Heart right ventricle (tissue), 16 donors: ENCODE measurements at regions of chr6 and their contacts with region 1.

Region 1: DNA sequence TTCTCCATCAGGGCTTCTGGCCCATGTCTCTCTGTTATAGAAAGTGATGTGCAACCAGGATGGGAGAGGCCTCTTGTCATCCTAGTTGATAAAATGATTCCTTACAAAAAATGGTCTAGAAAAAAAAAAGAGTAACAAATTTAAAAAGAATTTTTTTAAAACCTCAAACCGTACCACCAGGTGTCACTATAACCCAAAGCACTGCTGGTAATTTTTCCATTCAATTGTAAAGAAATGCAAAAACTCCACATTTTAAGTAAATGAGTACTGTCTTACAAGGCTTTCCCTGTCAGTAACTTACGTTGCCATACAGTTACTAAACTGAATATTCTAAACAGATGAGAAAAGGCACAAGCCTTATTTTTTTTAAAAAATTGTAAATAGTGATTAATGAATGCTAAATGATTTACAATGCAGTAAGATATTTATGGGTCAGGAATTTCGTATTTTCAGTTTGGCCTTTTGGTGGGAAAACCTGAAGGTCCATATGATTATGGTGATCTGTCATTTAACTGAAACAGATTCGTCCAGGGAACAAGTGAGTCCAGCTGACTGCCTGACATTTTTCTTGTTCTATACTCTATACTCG is 95.4 kb downstream of the OGFRL1 start:
- DNase-seq: peak in 1 of 2 donors; percentile 38
- ATAC-seq: peak in 1 of 8 donors; percentile 26
- H3K4me3 ChIP-seq: no peak overlapping the region
- H3K27ac ChIP-seq: peak overlapping the region in 1 of 10 donors; percentile 16
- H3K4me1 ChIP-seq: peaks cover 6 to 63% (median 31%) of the 10 kb centered on the region in 9 donors
- H3K27me3 ChIP-seq: no peaks in the 10 kb centered on the region
- CTCF ChIP-seq: peak; percentile 54 to 82 (median 72)

Region 2: GRCh38 chr6:71420693-71421328 is 36.8 kb after region 1 on chr6:
- intact Hi-C with region 1: loop called in 5 of 10 experiments (anchors 2 to 5 kb)
- DNase-seq: peak; percentile 95 to 98
- ATAC-seq: peak; percentile 98 to 99 (median 99)
- H3K4me3 ChIP-seq: peak overlapping the region; percentile 60 to 93 (median 89)
- H3K27ac ChIP-seq: peak overlapping the region; percentile 90 to 98 (median 96)
- H3K4me1 ChIP-seq: peaks cover 0 to 39% (median 22%) of the 10 kb centered on the region in 9 donors
- H3K27me3 ChIP-seq: peaks cover 0 to 46% (median 0%) of the 10 kb centered on the region in 7 donors
- CTCF ChIP-seq: peak in 2 of 9 donors; percentile 18 to 20

Region 3: GRCh38 chr6:71444222-71444621 is 60.2 kb after region 1 on chr6:
- intact Hi-C with region 1: loop called in 4 of 10 experiments (anchors 2 to 10 kb)
- DNase-seq: no peak
- ATAC-seq: peak in 5 of 8 donors; percentile 67 to 85 (median 73)
- H3K4me3 ChIP-seq: peak overlapping the region in 1 of 10 donors; percentile 24
- H3K27ac ChIP-seq: no peak overlapping the region
- H3K4me1 ChIP-seq: peaks cover 0 to 21% (median 0%) of the 10 kb centered on the region in 9 donors
- H3K27me3 ChIP-seq: no peaks in the 10 kb centered on the region
- CTCF ChIP-seq: peak in 7 of 9 donors; percentile 22 to 58 (median 26)

Region 4: DNA sequence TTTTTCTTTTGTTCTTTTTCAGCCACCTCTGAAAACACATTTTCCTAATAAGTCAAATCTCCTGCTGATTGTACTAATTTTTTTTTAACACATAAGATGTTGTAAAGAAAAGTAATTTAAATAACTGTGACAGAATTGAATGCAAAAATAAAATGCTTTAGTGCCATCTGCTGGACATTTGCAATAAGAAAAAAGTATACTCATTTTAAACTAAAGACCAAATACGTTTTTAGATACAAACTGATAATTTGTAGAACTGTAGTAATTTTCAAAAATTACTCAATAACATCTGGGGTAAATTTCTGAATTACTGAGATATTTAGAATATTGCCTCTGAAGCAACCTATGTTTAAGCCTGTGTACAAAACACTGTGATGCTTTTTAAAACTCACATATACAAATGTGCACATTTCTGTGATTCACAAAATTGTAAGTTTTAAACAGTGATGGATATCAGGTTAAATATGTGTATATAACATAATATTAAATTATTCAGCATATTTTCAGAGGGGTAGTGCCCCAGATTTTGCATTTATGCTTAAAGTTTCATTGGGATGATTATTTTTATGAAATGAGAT is 701.1 kb after region 1 on chr6:
- intact Hi-C with region 1: loop called in 2 of 10 experiments (anchors 10 kb)
- DNase-seq: no peak
- ATAC-seq: no peak
- H3K4me3 ChIP-seq: no peak overlapping the region
- H3K27ac ChIP-seq: no peak overlapping the region
- H3K4me1 ChIP-seq: no peaks in the 10 kb centered on the region
- H3K27me3 ChIP-seq: peaks cover 0 to 7% (median 4%) of the 10 kb centered on the region in 7 donors
- CTCF ChIP-seq: peak in 8 of 9 donors; percentile 30 to 68 (median 56)